IMR-90 (cell line): ENCODE measurements at regions of chrX and their contacts with region 1.

Region 1: DNA sequence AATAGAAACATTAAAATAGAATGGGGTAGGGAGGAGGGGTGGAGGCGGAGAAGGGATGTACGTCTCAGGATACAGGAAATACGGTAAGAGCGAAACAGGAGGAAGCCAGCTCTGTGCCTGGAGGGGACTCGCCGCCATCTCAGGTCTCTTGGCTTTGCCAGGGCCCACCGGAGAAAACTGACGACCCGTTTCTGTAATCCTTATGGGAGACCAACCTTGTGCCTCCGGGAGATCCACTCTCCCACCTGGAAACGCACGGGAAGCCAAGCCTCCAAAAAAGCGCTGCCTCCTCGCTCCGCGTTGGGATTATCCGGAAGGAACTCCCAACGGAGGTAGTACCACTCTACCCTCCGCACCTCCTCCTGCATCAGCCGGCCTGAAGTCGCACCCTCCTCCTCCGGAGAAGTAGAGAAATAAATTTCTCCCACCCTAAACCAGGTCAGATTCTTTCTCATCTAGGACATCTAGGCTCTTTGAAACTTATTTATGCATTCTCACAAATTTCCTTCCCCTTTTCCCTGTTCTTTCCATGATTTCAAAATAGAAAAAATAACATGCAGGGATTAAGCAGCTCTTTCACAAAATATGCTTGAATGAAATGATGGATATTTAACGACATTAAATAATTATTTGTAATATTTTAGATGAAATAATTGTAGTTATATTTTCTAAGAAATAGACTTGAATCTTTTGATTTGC is at the start of gene NBDY:
- DNase-seq: peak; percentile 37
- ATAC-seq: peak; percentile 93
- H3K4me3 ChIP-seq: peak within 1 kb of the TSS; percentile 99
- H3K27ac ChIP-seq: peak within 1 kb of the TSS; percentile 100
- H3K4me1 ChIP-seq: no peaks in the 10 kb centered on the region
- H3K27me3 ChIP-seq: no peaks in the 10 kb centered on the region
- CTCF ChIP-seq: no peak
- POLR2A ChIP-seq: peak; percentile 56; the same call in 1 of the 2 replicates
- RAD21 ChIP-seq: no peak
- total RNA-seq, gene NBDY: 2.5 and 3.2 TPM in 2 replicates

Region 2: GRCh38 chrX:55098691-55099090 is 1630.6 kb before region 1 on chrX:
- CTCF ChIA-PET with region 1: no interaction called
- POLR2A ChIA-PET with region 1: no interaction called
- dilution Hi-C with region 1: no loop called
- in situ Hi-C with region 1: no loop called
- intact Hi-C with region 1: no loop called
- DNase-seq: no peak
- ATAC-seq: no peak
- H3K4me3 ChIP-seq: no peak overlapping the region
- H3K27ac ChIP-seq: no peak overlapping the region
- H3K4me1 ChIP-seq: no peaks in the 10 kb centered on the region
- H3K27me3 ChIP-seq: peaks cover 6% of the 10 kb centered on the region; the same call in 1 of the 2 replicates
- CTCF ChIP-seq: no peak
- POLR2A ChIP-seq: no peak
- RAD21 ChIP-seq: no peak

Region 3: DNA sequence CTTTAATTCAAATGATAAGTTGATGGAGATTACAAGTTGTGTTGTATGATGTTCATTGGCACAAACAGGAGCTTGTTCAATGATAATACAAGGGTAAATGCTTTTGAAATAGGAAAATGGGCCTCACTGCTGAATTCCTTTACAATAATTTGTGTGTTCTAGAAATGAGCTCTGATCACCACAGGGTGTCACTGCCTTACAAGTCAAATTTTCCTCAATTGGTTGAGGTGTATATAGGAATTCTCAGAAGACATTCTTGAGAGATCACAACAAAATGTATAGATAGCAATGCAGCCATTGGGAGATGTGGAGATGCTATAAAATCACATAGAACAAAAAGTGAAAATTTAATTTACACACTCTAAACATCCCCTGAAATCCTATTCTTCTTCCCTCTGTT is 447.5 kb before region 1 on chrX:
- CTCF ChIA-PET with region 1: interaction called, 4 read pairs
- POLR2A ChIA-PET with region 1: no interaction called
- dilution Hi-C with region 1: no loop called
- in situ Hi-C with region 1: loop called (anchors 25 kb)
- intact Hi-C with region 1: loop called (anchors 2 kb)
- DNase-seq: peak; percentile 16
- ATAC-seq: no peak
- H3K4me3 ChIP-seq: no peak overlapping the region
- H3K27ac ChIP-seq: no peak overlapping the region
- H3K4me1 ChIP-seq: no peaks in the 10 kb centered on the region
- H3K27me3 ChIP-seq: no peaks in the 10 kb centered on the region; the same call in 1 of the 2 replicates
- CTCF ChIP-seq: peak; percentile 33; the same call in 1 of the 2 replicates
- POLR2A ChIP-seq: no peak
- RAD21 ChIP-seq: peak; percentile 36

Region 4: DNA sequence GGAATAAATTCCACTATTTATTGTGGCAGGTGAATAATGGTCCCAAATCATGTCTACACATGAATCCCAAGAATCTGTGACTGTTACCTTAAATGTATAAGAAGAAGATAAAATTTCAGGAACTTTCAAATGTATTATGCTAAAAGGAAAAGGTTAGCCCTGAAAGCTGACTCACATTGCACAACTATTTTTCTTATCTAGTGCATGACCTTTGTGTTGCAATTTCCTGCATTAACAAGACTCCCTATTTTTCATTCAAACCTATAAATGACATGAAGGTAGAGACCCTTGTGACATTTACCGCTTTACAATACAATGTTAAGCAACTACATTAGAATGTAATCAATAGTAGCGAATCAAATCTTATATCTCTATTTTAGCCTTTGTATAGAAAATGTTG is 129.2 kb before region 1 on chrX:
- CTCF ChIA-PET with region 1: no interaction called
- POLR2A ChIA-PET with region 1: no interaction called
- dilution Hi-C with region 1: no loop called
- in situ Hi-C with region 1: no loop called
- intact Hi-C with region 1: no loop called
- DNase-seq: peak; percentile 2
- ATAC-seq: no peak
- H3K4me3 ChIP-seq: no peak overlapping the region
- H3K27ac ChIP-seq: no peak overlapping the region
- H3K4me1 ChIP-seq: no peaks in the 10 kb centered on the region
- H3K27me3 ChIP-seq: peaks cover 2% of the 10 kb centered on the region; the same call in 1 of the 2 replicates
- CTCF ChIP-seq: no peak
- POLR2A ChIP-seq: no peak
- RAD21 ChIP-seq: no peak

Region 5: GRCh38 chrX:56882581-56882980 is 153.3 kb after region 1 on chrX:
- CTCF ChIA-PET with region 1: no interaction called
- POLR2A ChIA-PET with region 1: no interaction called
- dilution Hi-C with region 1: no loop called
- in situ Hi-C with region 1: no loop called
- intact Hi-C with region 1: no loop called
- DNase-seq: no peak
- ATAC-seq: no peak
- H3K4me3 ChIP-seq: no peak overlapping the region
- H3K27ac ChIP-seq: no peak overlapping the region
- H3K4me1 ChIP-seq: no peaks in the 10 kb centered on the region
- H3K27me3 ChIP-seq: no peaks in the 10 kb centered on the region
- CTCF ChIP-seq: no peak
- POLR2A ChIP-seq: no peak
- RAD21 ChIP-seq: no peak